Tibial artery (tissue), 4 donors: ENCODE measurements at regions of chr3 and their contacts with region 1.

Region 1: GRCh38 chr3:53134631-53135232 is 4.5 kb upstream of the RFT1 start:
- DNase-seq: peak; percentile 66 to 85
- H3K4me3 ChIP-seq: no peak overlapping the region
- H3K27ac ChIP-seq: no peak overlapping the region
- H3K4me1 ChIP-seq: peaks cover 0 to 16% (median 6%) of the 10 kb centered on the region in 4 donors
- H3K27me3 ChIP-seq: no peaks in the 10 kb centered on the region
- CTCF ChIP-seq: peak; percentile 75 to 80

Region 2: DNA sequence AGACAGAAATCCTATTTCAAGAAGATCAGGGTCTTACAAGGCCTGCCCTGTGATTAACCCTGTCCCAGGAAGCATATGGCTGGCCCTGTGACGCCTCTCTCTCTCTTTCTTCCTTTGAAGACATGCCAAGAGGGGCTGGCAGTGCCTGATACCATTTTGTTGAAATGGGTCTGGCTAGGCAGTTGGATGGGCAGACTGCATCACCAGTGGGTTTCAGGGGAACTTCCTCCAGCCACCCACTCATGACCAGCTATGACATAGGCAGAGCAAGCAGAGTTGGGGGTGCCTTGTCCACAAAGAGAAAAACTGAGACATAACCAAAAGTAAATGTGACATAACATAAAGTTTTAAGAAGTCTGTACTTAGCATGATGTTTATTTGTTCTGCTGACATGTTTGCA is 1781.0 kb before region 1 on chr3:
- intact Hi-C with region 1: no loop called
- DNase-seq: no peak
- H3K4me3 ChIP-seq: no peak overlapping the region
- H3K27ac ChIP-seq: no peak overlapping the region
- H3K4me1 ChIP-seq: no peaks in the 10 kb centered on the region
- H3K27me3 ChIP-seq: no peaks in the 10 kb centered on the region
- CTCF ChIP-seq: no peak

Region 3: GRCh38 chr3:53030619-53031449 is 103.9 kb before region 1 on chr3:
- intact Hi-C with region 1: no loop called
- DNase-seq: no peak
- H3K4me3 ChIP-seq: no peak overlapping the region
- H3K27ac ChIP-seq: no peak overlapping the region
- H3K4me1 ChIP-seq: peaks cover 0 to 7% (median 0%) of the 10 kb centered on the region in 4 donors
- H3K27me3 ChIP-seq: no peaks in the 10 kb centered on the region
- CTCF ChIP-seq: no peak

Region 4: GRCh38 chr3:53160660-53161449 is 26.1 kb after region 1 on chr3 and contains the start of gene PRKCD:
- intact Hi-C with region 1: loop called (anchors 2 kb)
- DNase-seq: peak; percentile 85 to 95
- H3K4me3 ChIP-seq: peak within 1 kb of the TSS; percentile 68 to 96
- H3K27ac ChIP-seq: peak within 1 kb of the TSS; percentile 86 to 93
- H3K4me1 ChIP-seq: peaks cover 0 to 64% (median 28%) of the 10 kb centered on the region in 4 donors
- H3K27me3 ChIP-seq: no peaks in the 10 kb centered on the region
- CTCF ChIP-seq: peak; percentile 64 to 73